Activated CD4-positive, alpha-beta T cell treated with anti-CD3 and anti-CD28 coated beads for 36 hours (primary cell): ENCODE measurements at regions of chr4 and their contacts with region 1.

Region 1: GRCh38 chr4:94349193-94349592 is 6.6 kb upstream of the HPGDS start:
- DNase-seq: no peak
- ATAC-seq: peak; percentile 91
- H3K4me3 Mint-ChIP-seq: no peak overlapping the region
- H3K27ac Mint-ChIP-seq: no peak overlapping the region
- H3K4me1 Mint-ChIP-seq: peaks cover 44% of the 10 kb centered on the region
- H3K27me3 Mint-ChIP-seq: peaks cover 4% of the 10 kb centered on the region

Region 2: GRCh38 chr4:94207469-94208224 is 141.5 kb before region 1 on chr4 and contains the start of gene SMARCAD1:
- CTCF ChIA-PET with region 1: no interaction called
- POLR2A ChIA-PET with region 1: no interaction called
- intact Hi-C with region 1: loop called in 1 of 2 experiments (anchors 5 kb)
- DNase-seq: peak; percentile 95
- ATAC-seq: peak; percentile 94
- H3K4me3 Mint-ChIP-seq: peak within 1 kb of the TSS; percentile 92
- H3K27ac Mint-ChIP-seq: peak within 1 kb of the TSS; percentile 99
- H3K4me1 Mint-ChIP-seq: peaks cover 27% of the 10 kb centered on the region
- H3K27me3 Mint-ChIP-seq: peaks cover 4% of the 10 kb centered on the region
- total RNA-seq, gene SMARCAD1: 32.3 to 33.1 TPM

Region 3: DNA sequence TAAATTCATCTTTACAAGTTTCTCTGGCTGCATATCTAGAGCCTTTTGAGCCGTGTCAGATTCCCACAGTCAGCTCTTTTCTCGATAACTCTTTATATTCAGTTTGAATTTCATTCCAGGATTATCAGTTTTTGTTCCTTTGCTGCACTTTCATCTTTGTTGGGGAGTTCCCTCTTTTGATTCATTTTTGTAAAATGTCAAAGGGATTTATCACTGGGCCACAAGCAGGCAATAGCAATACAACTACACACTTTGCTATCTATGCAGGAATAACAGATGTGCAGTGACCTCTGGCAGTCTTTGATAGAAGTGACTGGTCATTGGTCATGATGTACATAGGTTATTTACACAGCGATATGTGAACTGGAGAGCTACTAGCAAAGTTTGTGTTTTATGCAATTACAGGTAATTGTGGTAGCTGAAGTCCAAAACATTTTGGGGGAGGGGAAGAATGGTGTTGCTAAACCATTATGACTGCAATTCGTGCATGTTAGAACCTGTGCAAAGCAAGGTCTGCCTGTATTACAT is 50.4 kb before region 1 on chr4:
- CTCF ChIA-PET with region 1: no interaction called
- POLR2A ChIA-PET with region 1: no interaction called
- intact Hi-C with region 1: no loop called
- DNase-seq: no peak
- ATAC-seq: no peak
- H3K4me3 Mint-ChIP-seq: no peak overlapping the region
- H3K27ac Mint-ChIP-seq: no peak overlapping the region
- H3K4me1 Mint-ChIP-seq: no peaks in the 10 kb centered on the region
- H3K27me3 Mint-ChIP-seq: no peaks in the 10 kb centered on the region

Region 4: DNA sequence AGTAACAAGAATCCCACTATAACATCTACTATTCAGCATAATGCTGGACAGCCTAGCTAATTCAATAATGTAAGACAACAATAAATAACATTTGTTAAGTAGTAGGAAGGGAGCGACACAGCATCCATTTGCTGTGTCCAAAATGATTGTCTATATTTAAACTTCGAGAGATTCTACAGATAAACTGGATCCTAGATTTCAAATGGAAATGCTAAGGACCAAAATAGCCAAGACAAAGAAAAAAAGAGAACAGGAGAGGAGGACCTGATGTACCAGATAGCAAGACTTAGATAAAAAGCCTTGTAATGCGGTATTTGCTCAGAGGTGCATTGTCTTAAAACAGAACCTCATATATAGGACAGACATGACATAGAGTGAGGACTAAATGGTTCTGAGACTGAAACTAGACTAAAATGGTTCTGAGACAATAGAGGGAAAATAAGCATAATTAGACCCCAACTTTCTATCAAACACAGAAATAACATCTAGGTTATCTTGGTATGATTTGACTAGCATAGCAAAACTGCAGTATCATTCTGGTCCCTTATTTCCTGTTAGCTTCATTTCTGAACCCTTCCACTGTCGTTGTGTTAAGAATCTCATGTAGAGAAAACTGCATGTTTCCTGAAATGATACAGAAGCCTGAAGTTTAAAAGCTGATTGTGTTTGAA is 10.4 kb before region 1 on chr4:
- CTCF ChIA-PET with region 1: interaction called, 5 read pairs
- POLR2A ChIA-PET with region 1: no interaction called
- intact Hi-C with region 1: loop called (anchors 1 kb)
- DNase-seq: no peak
- ATAC-seq: peak; percentile 90
- H3K4me3 Mint-ChIP-seq: peak overlapping the region; percentile 13
- H3K27ac Mint-ChIP-seq: peak overlapping the region; percentile 71
- H3K4me1 Mint-ChIP-seq: peaks cover 13% of the 10 kb centered on the region
- H3K27me3 Mint-ChIP-seq: no peaks in the 10 kb centered on the region

Region 5: GRCh38 chr4:94442251-94442650 is 93.1 kb after region 1 on chr4:
- CTCF ChIA-PET with region 1: no interaction called
- POLR2A ChIA-PET with region 1: no interaction called
- intact Hi-C with region 1: no loop called
- DNase-seq: no peak
- ATAC-seq: no peak
- H3K4me3 Mint-ChIP-seq: no peak overlapping the region
- H3K27ac Mint-ChIP-seq: no peak overlapping the region
- H3K4me1 Mint-ChIP-seq: no peaks in the 10 kb centered on the region
- H3K27me3 Mint-ChIP-seq: peaks cover 5% of the 10 kb centered on the region

Region 6: DNA sequence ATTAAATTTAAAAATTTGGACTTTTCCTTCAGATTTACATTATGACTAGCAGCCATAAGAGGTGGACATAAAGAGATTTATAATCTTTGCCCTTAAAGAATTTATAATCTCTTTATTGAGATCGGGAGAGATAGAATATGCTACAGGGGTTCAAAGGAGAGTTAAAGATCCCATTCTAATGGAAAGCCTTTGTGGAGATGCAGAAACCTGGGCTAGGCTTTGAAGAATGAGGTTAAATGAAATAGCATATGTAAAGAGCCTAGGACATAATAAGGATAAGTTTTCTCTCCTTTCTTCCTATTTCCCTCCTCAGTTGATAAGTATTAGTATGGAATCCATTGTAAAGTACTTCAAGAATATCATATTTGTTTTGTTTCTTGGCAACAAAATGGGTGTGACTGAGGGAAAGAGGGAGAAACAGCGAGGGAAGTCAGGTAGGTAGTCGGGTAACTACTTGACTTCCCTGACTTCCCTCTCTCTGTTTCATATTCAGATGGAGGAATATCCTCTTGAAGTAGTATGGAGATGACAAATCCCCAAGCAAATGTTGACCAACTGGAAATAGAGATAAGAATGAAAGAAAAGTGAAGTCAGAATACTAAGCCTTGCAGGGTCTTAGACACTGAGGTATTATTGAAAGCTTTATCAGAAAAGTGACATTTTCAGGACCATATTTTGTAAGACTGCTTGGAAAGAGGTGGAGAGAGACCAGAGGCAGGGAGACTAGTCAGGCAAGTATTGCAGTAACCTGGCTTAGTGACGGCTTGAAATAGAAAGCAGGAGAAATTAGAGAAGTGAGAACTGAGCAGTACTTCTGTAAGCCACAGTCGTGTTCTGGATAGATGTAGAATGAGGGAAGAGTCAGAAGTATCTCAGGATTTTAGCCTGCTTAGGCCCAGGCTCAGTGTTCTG is 185.5 kb after region 1 on chr4:
- CTCF ChIA-PET with region 1: no interaction called
- POLR2A ChIA-PET with region 1: no interaction called
- intact Hi-C with region 1: no loop called
- DNase-seq: no peak
- ATAC-seq: no peak
- H3K4me3 Mint-ChIP-seq: no peak overlapping the region
- H3K27ac Mint-ChIP-seq: no peak overlapping the region
- H3K4me1 Mint-ChIP-seq: peaks cover 3% of the 10 kb centered on the region
- H3K27me3 Mint-ChIP-seq: no peaks in the 10 kb centered on the region